ENCODE measurements at regions of chr12 and their contacts with region 1.

Region 1: GRCh38 chr12:80412369-80412953 is 31.6 kb upstream of the PTPRQ start:
- DNase-seq: peak in 1 of 4 donors; percentile 13
- ATAC-seq: peak; percentile 80
- H3K4me3 ChIP-seq: no peak overlapping the region
- H3K27ac ChIP-seq: no peak overlapping the region
- H3K4me1 ChIP-seq: no peaks in the 10 kb centered on the region
- H3K27me3 ChIP-seq: no peaks in the 10 kb centered on the region
- CTCF ChIP-seq: peak; percentile 40 to 91 (median 78)
- POLR2A ChIP-seq: no peak

Region 2: GRCh38 chr12:80353257-80353656 is 59.2 kb before region 1 on chr12:
- intact Hi-C with region 1: no loop called
- DNase-seq: no peak
- ATAC-seq: no peak
- H3K4me3 ChIP-seq: no peak overlapping the region
- H3K27ac ChIP-seq: no peak overlapping the region
- H3K4me1 ChIP-seq: no peaks in the 10 kb centered on the region
- H3K27me3 ChIP-seq: no peaks in the 10 kb centered on the region
- CTCF ChIP-seq: no peak
- POLR2A ChIP-seq: no peak

Region 3: GRCh38 chr12:80598004-80598606 is 185.6 kb after region 1 on chr12:
- intact Hi-C with region 1: loop called (anchors 10 kb)
- DNase-seq: peak; percentile 2 to 23 (median 13)
- ATAC-seq: no peak
- H3K4me3 ChIP-seq: no peak overlapping the region
- H3K27ac ChIP-seq: no peak overlapping the region
- H3K4me1 ChIP-seq: no peaks in the 10 kb centered on the region
- H3K27me3 ChIP-seq: no peaks in the 10 kb centered on the region
- CTCF ChIP-seq: peak in 3 of 7 experiments; percentile 36 to 52 (median 46)
- POLR2A ChIP-seq: no peak

Region 4: GRCh38 chr12:80763874-80764273 is 351.4 kb after region 1 on chr12:
- intact Hi-C with region 1: loop called (anchors 10 kb)
- DNase-seq: peak in 3 of 4 donors; percentile 20 to 52 (median 42)
- ATAC-seq: peak; percentile 55
- H3K4me3 ChIP-seq: no peak overlapping the region
- H3K27ac ChIP-seq: no peak overlapping the region
- H3K4me1 ChIP-seq: peaks cover 3% of the 10 kb centered on the region
- H3K27me3 ChIP-seq: no peaks in the 10 kb centered on the region
- CTCF ChIP-seq: peak; percentile 17 to 62 (median 51)
- POLR2A ChIP-seq: no peak